ENCODE measurements at regions of chr22 and their contacts with region 1.

Region 1: DNA sequence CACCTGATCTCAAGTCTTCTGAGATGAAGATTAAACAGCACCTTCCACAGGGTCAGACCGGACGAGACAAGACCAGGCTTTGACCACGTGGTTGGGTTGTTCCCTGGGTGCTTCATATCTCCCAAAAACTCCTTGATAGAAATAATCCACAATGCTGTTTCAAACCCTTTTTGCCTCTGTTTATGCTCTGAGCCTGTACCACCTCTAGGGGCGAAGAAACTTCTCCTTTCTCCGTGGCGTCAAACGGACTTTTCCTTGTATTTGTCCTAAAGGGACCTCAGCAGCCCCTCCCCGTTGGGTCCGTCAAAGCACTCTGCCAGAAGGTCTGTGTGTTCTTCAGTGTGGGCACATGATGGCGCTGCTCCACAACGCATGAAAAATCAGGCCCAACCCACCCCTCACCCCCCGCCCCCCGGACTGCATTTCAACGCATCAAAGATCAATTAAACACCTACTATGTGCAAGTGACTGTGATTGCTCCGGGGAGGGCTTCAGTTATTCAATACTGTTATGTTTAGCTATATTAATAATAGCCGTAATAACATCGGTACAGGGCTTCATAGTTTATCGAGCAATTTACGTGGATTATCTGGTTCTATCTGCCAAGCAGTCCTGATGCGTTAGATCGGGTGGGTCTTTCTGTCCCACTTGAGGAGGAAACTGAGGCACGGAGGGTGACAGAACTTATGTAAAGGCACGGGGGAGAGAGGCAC is 17.3 kb upstream of the EIF3D start:
- DNase-seq: peak; percentile 67
- ATAC-seq: peak; percentile 79
- H3K4me3 ChIP-seq: no peak overlapping the region
- H3K4me3 Mint-ChIP-seq: no peak overlapping the region
- H3K27ac ChIP-seq: no peak overlapping the region
- H3K27ac Mint-ChIP-seq: no peak overlapping the region
- H3K4me1 ChIP-seq: peaks cover 15 to 32% of the 10 kb centered on the region in 2 donors
- H3K4me1 Mint-ChIP-seq: peaks cover 19% of the 10 kb centered on the region
- H3K27me3 ChIP-seq: no peaks in the 10 kb centered on the region
- H3K27me3 Mint-ChIP-seq: no peaks in the 10 kb centered on the region
- CTCF ChIP-seq: peak; percentile 67

Region 2: DNA sequence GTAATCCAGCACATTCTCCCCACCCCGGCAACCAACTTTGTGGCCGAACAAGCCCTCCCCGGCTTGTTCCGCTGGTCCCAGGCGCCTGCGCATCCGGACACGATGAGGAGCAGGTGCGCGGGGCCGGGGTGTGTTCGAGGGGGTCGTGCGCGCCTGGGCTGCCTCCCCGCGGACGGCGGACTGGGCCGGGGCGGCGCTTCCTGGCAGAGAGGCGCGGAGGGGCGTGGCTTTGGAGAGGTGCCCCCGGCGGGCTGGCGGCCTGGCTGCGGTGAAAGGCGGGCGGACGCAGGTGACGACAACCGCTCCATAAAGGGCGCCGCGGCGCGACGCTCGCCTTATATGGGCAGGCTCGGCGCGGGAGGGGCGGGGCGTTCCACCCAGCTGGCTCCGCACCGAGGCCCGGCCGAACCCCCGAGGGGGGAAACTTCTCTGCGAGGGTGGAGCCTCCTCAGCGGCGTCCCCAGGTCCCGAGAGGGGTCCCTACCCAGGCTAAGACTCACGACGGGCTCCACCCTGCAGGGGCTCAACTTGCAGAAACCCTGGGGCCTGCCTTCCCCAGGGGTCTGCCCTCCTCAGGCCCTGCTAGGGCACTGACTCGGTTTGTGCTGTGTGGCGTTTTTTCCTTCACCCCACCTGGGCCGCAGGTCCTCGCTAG is 91.2 kb before region 1 on chr22:
- CTCF ChIA-PET with region 1: no interaction called
- POLR2A ChIA-PET with region 1: no interaction called
- intact Hi-C with region 1: no loop called
- DNase-seq: peak; percentile 96
- ATAC-seq: peak; percentile 62
- H3K4me3 ChIP-seq: peak overlapping the region; percentile 18 to 59 (median 54)
- H3K4me3 Mint-ChIP-seq: peak overlapping the region; percentile 77
- H3K27ac ChIP-seq: peak overlapping the region; percentile 84 to 93
- H3K27ac Mint-ChIP-seq: peak overlapping the region; percentile 91
- H3K4me1 ChIP-seq: peaks cover 50 to 60% of the 10 kb centered on the region in 2 donors
- H3K4me1 Mint-ChIP-seq: peaks cover 45% of the 10 kb centered on the region
- H3K27me3 ChIP-seq: no peaks in the 10 kb centered on the region
- H3K27me3 Mint-ChIP-seq: no peaks in the 10 kb centered on the region
- CTCF ChIP-seq: no peak

Region 3: DNA sequence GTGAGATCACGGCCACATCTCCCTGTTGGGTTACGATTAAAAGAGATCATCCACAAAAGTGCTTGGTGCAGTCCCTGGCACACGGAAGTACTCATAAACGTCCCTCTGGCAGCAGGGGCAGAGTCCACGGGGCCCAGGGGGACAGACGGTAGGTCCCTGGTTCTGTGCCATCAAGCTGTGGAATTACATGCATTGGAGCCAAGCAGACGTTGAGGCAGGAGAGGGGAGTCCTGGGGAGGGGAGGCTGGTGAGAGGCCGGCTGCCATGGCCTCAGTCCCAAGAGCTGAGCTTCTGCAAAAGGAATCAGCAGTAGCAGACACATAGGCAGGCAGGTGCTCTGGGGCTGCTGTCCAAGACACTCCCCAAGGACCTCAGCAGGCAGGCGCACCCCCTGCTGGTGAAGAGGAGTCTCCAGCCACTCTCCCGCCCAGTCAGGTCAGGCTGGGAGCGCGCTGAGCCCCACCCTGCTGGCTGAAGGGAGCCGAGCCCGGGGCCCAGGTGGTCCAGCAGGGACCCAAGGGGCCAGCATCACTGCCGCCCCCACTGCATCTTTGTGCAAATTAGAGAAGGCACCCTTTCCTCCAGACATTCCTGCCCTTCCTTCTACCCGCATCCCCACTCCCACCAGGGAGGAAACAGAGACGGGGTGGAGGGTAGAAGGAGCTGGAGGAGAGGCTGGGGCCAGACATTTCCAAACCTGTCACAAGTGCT is 497.7 kb after region 1 on chr22:
- CTCF ChIA-PET with region 1: interaction called, 6 read pairs
- POLR2A ChIA-PET with region 1: no interaction called
- intact Hi-C with region 1: loop called (anchors 5 kb)
- DNase-seq: peak; percentile 70
- ATAC-seq: peak; percentile 95
- H3K4me3 ChIP-seq: no peak overlapping the region
- H3K4me3 Mint-ChIP-seq: no peak overlapping the region
- H3K27ac ChIP-seq: no peak overlapping the region
- H3K27ac Mint-ChIP-seq: peak overlapping the region; percentile 67
- H3K4me1 ChIP-seq: peaks cover 9 to 14% of the 10 kb centered on the region in 2 donors
- H3K4me1 Mint-ChIP-seq: peaks cover 15% of the 10 kb centered on the region
- H3K27me3 ChIP-seq: no peaks in the 10 kb centered on the region
- H3K27me3 Mint-ChIP-seq: peaks cover 16% of the 10 kb centered on the region
- CTCF ChIP-seq: peak; percentile 67

Measured in B cell (primary cell).